ENCODE measurements at regions of chr12 and their contacts with region 1.

Region 1: DNA sequence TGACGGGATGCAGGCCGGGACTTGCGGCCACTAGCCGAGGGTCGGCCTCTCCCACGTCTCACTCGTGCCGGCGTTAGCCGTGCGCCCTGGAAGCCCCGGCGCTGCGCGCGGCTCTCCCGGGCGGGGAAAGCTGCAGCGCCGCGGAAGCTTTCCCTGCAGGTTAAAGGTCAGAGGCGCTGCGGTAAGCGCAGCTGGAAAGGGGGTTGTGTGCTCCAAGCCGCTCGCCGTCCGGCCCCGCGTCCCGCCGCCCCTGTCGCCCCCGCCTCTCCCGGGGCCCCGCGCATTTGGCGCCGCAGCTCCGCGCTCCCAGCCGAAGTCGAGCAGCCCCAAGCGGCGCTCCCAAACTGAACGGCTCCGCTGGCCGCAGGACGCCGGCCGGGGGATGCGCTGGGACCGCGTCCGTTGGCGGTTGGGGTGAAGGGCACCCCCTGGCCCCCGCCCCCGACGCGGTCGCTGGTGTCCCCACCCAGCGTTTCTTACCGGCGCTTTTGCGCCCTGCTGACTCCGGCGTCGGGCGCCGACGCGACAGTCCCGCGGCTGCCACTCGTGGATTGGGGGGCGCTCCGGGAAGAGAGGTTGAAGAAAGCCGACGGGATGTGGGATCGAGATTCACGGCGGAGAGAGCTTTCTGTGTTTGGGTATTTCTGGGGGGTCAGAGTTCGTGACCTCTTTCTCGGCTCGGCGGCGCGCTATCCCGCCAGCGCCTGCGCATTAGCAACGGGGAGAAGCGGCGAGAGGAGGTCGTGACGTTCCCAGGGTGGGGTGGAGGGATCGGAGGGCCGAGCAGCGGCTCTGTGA is at the start of gene NR2C1:
- DNase-seq: peak; percentile 76 to 95 (median 92)
- ATAC-seq: peak; percentile 98
- H3K4me3 ChIP-seq: peak within 1 kb of the TSS; percentile 81
- H3K4me3 Mint-ChIP-seq: peak within 1 kb of the TSS; percentile 92 to 98 (median 94)
- H3K27ac ChIP-seq: peak within 1 kb of the TSS; percentile 81
- H3K27ac Mint-ChIP-seq: peak within 1 kb of the TSS; percentile 84 to 96 (median 93)
- H3K4me1 ChIP-seq: peaks cover 0 to 9% of the 10 kb centered on the region in 2 donors
- H3K4me1 Mint-ChIP-seq: peaks cover 8 to 40% (median 30%) of the 10 kb centered on the region in 7 donors
- H3K27me3 ChIP-seq: no peaks in the 10 kb centered on the region
- H3K27me3 Mint-ChIP-seq: peaks cover 0 to 5% (median 0%) of the 10 kb centered on the region in 5 donors
- total RNA-seq, gene NR2C1: 30.5 to 66.8 (median 58.7) TPM

Region 2: DNA sequence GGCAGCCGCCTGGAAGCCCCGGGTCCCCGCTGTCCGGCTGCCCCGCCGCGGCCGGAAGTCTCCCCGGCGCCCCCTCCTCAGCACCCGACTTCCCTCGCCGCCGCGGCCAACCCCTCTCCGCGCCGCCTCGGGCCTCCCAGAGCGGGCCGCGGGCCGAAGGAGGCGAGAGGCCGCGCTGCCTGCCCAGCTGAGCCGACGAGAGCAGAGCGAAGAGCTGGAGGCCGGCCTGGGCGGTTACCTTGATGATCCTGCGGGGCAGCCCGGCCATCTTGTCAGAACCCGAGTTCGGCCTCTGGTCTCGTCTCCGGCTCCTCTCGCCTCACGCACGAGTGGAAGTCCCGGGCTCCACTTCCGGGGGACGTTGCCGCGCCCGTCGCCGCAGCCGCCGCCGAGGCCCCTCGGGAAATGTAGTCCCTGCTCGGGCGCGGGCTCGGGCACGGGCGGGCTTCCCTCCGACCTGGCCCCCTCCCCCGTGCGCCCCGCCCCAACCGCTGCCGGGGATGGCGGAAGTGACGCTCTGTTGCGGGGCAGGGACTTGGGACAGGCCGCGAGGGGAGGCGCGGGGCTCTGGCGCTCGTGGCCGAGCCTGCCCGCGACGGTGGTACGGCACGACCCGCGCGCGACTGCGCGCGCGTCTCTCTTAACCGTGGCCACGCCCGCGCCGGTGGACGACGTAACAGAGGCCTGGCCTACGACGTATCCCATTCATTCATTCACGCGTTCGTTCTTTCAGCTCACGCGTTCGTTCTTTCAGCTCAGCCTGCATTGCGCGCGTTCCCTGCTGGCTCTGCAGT is 1631.3 kb before region 1 on chr12 and contains the start of gene UBE2N:
- CTCF ChIA-PET with region 1: no interaction called
- POLR2A ChIA-PET with region 1: no interaction called
- intact Hi-C with region 1: loop called in 1 of 2 experiments (anchors 1 kb)
- DNase-seq: peak; percentile 96 to 98 (median 97)
- ATAC-seq: peak; percentile 95
- H3K4me3 ChIP-seq: peak within 1 kb of the TSS; percentile 66
- H3K4me3 Mint-ChIP-seq: peak within 1 kb of the TSS; percentile 89 to 100 (median 97)
- H3K27ac ChIP-seq: peak within 1 kb of the TSS; percentile 98
- H3K27ac Mint-ChIP-seq: peak within 1 kb of the TSS; percentile 96 to 100 (median 98)
- H3K4me1 ChIP-seq: peaks cover 35 to 48% of the 10 kb centered on the region in 2 donors
- H3K4me1 Mint-ChIP-seq: peaks cover 44 to 54% (median 49%) of the 10 kb centered on the region in 7 donors
- H3K27me3 ChIP-seq: no peaks in the 10 kb centered on the region
- H3K27me3 Mint-ChIP-seq: no peaks in the 10 kb centered on the region
- total RNA-seq, gene UBE2N: 76.6 to 180 (median 77.5) TPM

Region 3: GRCh38 chr12:94603434-94604365 is 469.4 kb before region 1 on chr12:
- CTCF ChIA-PET with region 1: no interaction called
- POLR2A ChIA-PET with region 1: no interaction called
- intact Hi-C with region 1: loop called (anchors 1 to 2 kb)
- DNase-seq: peak in 7 of 9 donors; percentile 16 to 58 (median 37)
- ATAC-seq: peak; percentile 80
- H3K4me3 ChIP-seq: no peak overlapping the region
- H3K4me3 Mint-ChIP-seq: no peak overlapping the region
- H3K27ac ChIP-seq: no peak overlapping the region
- H3K27ac Mint-ChIP-seq: no peak overlapping the region
- H3K4me1 ChIP-seq: no peaks in the 10 kb centered on the region
- H3K4me1 Mint-ChIP-seq: peaks cover 0 to 7% (median 0%) of the 10 kb centered on the region in 7 donors
- H3K27me3 ChIP-seq: no peaks in the 10 kb centered on the region
- H3K27me3 Mint-ChIP-seq: peaks cover 3 to 41% (median 8%) of the 10 kb centered on the region in 5 donors

Region 4: DNA sequence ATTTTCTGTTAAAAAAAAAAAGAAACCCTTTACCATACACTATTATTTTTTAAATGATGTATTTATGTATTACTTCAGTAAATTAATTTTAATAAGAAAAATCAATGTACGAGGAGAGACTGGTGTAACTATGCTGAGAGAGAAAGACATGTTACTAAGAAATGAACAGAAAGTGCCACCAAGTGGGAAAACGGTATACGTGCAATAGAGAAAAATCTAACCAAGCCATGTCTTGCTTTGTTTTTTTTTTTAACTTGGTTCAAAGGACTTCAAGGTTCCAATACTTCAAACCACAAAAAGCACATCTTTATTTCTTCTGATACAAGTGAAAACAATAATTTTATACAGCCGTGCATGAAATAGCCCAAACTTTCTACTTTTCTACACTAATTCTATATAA is 92.5 kb before region 1 on chr12:
- CTCF ChIA-PET with region 1: interaction called, 4 read pairs
- POLR2A ChIA-PET with region 1: no interaction called
- intact Hi-C with region 1: loop called in 1 of 2 experiments (anchors 2 kb)
- DNase-seq: peak in 7 of 9 donors; percentile 20 to 73 (median 60)
- ATAC-seq: peak; percentile 76
- H3K4me3 ChIP-seq: no peak overlapping the region
- H3K4me3 Mint-ChIP-seq: peak overlapping the region in 9 of 10 donors; percentile 24 to 73 (median 59)
- H3K27ac ChIP-seq: no peak overlapping the region
- H3K27ac Mint-ChIP-seq: peak overlapping the region in 8 of 9 donors; percentile 30 to 86 (median 72)
- H3K4me1 ChIP-seq: peaks cover 0 to 32% of the 10 kb centered on the region in 2 donors
- H3K4me1 Mint-ChIP-seq: peaks cover 22 to 88% (median 67%) of the 10 kb centered on the region in 7 donors
- H3K27me3 ChIP-seq: no peaks in the 10 kb centered on the region
- H3K27me3 Mint-ChIP-seq: no peaks in the 10 kb centered on the region

Region 5: DNA sequence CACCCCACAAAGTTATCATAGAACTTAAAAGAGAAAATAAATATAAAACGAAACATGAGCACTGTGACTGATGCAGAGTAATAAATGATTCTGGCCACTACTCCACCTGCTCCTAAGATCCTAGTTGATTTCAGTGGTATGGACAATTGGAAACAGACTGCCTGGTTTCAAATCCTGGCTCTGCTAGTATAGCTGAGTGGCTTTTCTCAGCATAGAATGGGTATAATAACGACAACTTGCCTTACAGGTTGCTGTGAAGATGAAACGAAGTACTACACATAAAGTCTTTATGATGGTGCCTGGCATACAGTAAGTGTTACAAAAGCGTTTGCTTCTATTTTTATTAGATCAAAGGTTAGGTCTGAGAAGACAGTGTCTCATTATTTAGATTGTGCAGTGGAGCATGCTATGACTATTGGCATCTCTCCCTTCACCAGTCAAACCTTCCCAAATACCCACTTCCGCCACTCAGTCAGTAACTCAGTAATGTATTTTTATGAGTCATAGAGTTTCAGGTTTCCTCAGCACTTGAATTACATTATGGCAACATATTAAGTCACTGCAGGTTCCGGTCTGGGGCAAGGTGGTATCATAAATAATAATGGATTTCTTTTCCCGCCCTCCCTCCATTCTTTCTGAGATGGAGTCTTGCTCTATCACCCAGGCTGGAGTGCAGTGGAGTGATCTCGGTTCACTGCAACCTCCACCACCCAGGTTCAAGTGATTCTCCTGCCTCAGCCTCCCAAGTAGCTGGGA is 30.0 kb after region 1 on chr12:
- CTCF ChIA-PET with region 1: no interaction called
- POLR2A ChIA-PET with region 1: no interaction called
- intact Hi-C with region 1: loop called in 1 of 2 experiments (anchors 1 kb)
- DNase-seq: peak in 1 of 9 donors; percentile 38
- ATAC-seq: peak; percentile 64
- H3K4me3 ChIP-seq: no peak overlapping the region
- H3K4me3 Mint-ChIP-seq: peak overlapping the region in 1 of 10 donors; percentile 46
- H3K27ac ChIP-seq: no peak overlapping the region
- H3K27ac Mint-ChIP-seq: peak overlapping the region in 3 of 9 donors; percentile 26 to 70 (median 32)
- H3K4me1 ChIP-seq: no peaks in the 10 kb centered on the region
- H3K4me1 Mint-ChIP-seq: peaks cover 0 to 13% (median 0%) of the 10 kb centered on the region in 7 donors
- H3K27me3 ChIP-seq: no peaks in the 10 kb centered on the region
- H3K27me3 Mint-ChIP-seq: peaks cover 0 to 3% (median 0%) of the 10 kb centered on the region in 5 donors

Region 6: DNA sequence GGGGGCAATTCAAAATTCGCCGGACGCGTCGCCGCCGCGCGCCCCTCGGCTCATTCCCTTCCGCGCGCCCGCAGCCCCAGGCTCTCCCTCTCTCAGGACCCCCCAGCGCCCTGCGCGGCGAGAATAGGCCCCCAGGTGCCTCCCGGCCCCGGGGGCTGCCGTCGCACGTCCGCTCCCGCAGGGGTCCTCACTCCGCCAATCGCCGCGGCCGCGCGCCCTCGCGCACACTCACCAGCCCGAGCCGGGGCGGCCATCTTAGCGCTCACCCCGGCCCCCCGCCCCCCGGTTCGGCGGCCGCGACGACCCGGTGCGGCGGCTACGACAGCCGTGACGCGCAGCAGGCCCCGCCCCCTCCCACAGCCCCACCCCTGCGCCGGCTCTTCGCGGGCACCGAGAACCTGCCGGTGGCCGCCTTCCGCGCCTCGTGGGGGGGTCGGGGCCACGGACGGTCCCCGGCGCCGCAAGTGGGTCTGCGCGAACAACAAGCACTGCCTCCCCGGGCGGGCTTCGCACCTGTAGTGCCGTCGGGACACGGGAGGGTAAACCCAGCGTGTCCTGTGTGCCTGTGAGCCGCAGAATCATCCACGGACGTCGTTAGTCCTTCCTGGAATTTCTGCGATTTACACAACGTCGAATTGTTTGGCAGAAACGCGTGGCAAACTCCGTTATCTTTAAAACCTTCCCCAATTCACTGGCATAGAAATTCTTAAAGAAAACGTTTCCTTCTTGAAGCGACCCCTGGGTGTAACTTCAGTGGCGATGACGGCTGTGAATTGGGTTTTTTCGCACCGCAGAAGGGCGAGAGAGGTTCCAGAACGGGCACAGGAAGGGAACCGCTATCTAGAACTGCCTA is 475.7 kb after region 1 on chr12:
- CTCF ChIA-PET with region 1: no interaction called
- POLR2A ChIA-PET with region 1: no interaction called
- intact Hi-C with region 1: loop called (anchors 1 kb)
- DNase-seq: peak; percentile 66 to 81 (median 77)
- ATAC-seq: peak; percentile 94
- H3K4me3 ChIP-seq: peak overlapping the region; percentile 75
- H3K4me3 Mint-ChIP-seq: peak overlapping the region; percentile 89 to 96 (median 94)
- H3K27ac ChIP-seq: peak overlapping the region; percentile 96
- H3K27ac Mint-ChIP-seq: peak overlapping the region; percentile 70 to 98 (median 94)
- H3K4me1 ChIP-seq: peaks cover 6 to 23% of the 10 kb centered on the region in 2 donors
- H3K4me1 Mint-ChIP-seq: peaks cover 36 to 73% (median 61%) of the 10 kb centered on the region in 7 donors
- H3K27me3 ChIP-seq: no peaks in the 10 kb centered on the region
- H3K27me3 Mint-ChIP-seq: peaks cover 0 to 22% (median 7%) of the 10 kb centered on the region in 5 donors

Region 7: DNA sequence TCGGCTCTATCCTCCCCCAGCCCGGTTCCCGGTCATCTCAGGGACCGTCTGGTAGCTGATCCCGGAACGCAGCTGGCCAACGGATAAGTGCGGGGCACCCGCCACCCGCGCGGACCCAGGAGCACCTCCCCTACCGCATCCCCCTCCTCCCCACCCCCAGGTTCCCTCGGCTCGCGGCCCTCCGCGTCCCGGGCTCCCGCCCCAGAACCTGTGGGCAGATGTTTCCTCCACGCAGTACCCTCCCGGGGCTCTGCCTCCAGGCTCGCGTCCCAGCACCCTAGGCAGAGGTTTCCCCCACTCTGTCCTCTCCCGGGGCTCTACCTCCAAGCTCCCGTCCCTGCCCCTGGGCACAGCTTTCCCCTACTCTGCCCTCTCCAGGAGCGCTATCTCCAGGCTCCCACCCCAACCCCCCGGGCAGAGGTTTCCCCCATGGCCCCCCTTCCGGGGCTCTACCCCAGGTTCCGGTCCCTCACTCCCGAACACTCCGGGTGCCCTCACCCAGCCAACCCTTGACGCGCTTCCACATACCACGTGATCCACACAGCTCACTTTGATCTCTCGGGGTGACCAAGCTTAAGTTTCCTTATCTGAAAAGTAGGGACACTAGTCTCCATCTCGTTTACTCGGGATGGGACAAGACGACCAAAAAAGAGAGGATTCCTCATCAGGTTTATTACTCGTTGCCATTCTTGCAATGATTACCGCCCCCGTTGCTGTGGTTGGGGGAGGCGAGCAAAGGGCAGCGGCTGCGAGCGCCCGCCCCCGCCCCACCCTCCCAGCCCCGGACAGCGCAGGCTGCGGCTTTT is 869.6 kb after region 1 on chr12 and contains the start of gene CCDC38:
- CTCF ChIA-PET with region 1: no interaction called
- POLR2A ChIA-PET with region 1: no interaction called
- intact Hi-C with region 1: loop called in 1 of 2 experiments (anchors 1 kb)
- DNase-seq: peak; percentile 56 to 86 (median 82)
- ATAC-seq: peak; percentile 97
- H3K4me3 ChIP-seq: peak within 1 kb of the TSS; percentile 93
- H3K4me3 Mint-ChIP-seq: peak within 1 kb of the TSS; percentile 88 to 99 (median 96)
- H3K27ac ChIP-seq: peak within 1 kb of the TSS; percentile 86
- H3K27ac Mint-ChIP-seq: peak within 1 kb of the TSS; percentile 85 to 97 (median 89)
- H3K4me1 ChIP-seq: peaks cover 6% of the 10 kb centered on the region in 2 donors
- H3K4me1 Mint-ChIP-seq: peaks cover 4 to 12% (median 10%) of the 10 kb centered on the region in 7 donors
- H3K27me3 ChIP-seq: no peaks in the 10 kb centered on the region
- H3K27me3 Mint-ChIP-seq: peaks cover 0 to 26% (median 0%) of the 10 kb centered on the region in 5 donors
- total RNA-seq, gene CCDC38: 0.07 to 0.27 TPM in 2 of 5 experiments, not detected in the others